K562 (cell line): ENCODE measurements at regions of chr11 and their contacts with region 1.

Region 1: GRCh38 chr11:106619320-106619990 is 398.8 kb downstream of the GUCY1A2 start:
- DNase-seq: no peak
- ATAC-seq: no peak
- H3K4me3 ChIP-seq: no peak overlapping the region
- H3K27ac ChIP-seq: no peak overlapping the region
- H3K4me1 ChIP-seq: no peaks in the 10 kb centered on the region
- H3K27me3 ChIP-seq: no peaks in the 10 kb centered on the region
- CTCF ChIP-seq: no peak
- EP300 ChIP-seq: no peak
- POLR2A ChIP-seq: no peak
- RAD21 ChIP-seq: no peak

Region 2: GRCh38 chr11:106353054-106353453 is 266.4 kb before region 1 on chr11:
- CTCF ChIA-PET with region 1: no interaction called
- POLR2A ChIA-PET with region 1: no interaction called
- in situ Hi-C with region 1: no loop called
- intact Hi-C with region 1: no loop called
- DNase-seq: no peak
- ATAC-seq: no peak
- H3K4me3 ChIP-seq: no peak overlapping the region
- H3K27ac ChIP-seq: no peak overlapping the region
- H3K4me1 ChIP-seq: no peaks in the 10 kb centered on the region
- H3K27me3 ChIP-seq: no peaks in the 10 kb centered on the region
- CTCF ChIP-seq: no peak
- EP300 ChIP-seq: no peak
- POLR2A ChIP-seq: no peak
- RAD21 ChIP-seq: no peak

Region 3: DNA sequence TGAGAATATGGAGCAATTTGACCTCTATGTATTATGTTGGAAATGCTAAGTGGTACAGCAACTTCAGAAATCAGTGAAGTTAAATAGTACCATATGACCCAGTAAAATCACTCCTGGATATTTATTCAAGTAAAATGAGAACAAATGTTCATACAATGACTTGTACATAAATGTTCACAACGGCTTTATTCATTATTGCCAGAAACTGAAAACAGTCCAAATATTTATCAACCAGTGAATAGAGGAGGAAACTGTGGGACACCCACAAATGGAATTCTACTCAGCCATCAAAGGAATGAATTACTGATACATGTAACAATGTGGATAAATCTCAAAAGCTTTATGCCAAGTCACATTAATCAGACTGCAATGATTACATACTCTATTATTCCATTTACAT is 125.7 kb before region 1 on chr11:
- CTCF ChIA-PET with region 1: no interaction called
- POLR2A ChIA-PET with region 1: no interaction called
- in situ Hi-C with region 1: no loop called
- intact Hi-C with region 1: no loop called
- DNase-seq: no peak
- ATAC-seq: no peak
- H3K4me3 ChIP-seq: no peak overlapping the region
- H3K27ac ChIP-seq: no peak overlapping the region
- H3K4me1 ChIP-seq: no peaks in the 10 kb centered on the region
- H3K27me3 ChIP-seq: no peaks in the 10 kb centered on the region
- CTCF ChIP-seq: no peak
- EP300 ChIP-seq: no peak
- POLR2A ChIP-seq: no peak
- RAD21 ChIP-seq: no peak

Region 4: GRCh38 chr11:106552694-106553203 is 66.7 kb before region 1 on chr11:
- CTCF ChIA-PET with region 1: no interaction called
- POLR2A ChIA-PET with region 1: no interaction called
- in situ Hi-C with region 1: no loop called
- intact Hi-C with region 1: loop called (anchors 2 kb)
- DNase-seq: no peak
- ATAC-seq: no peak
- H3K4me3 ChIP-seq: no peak overlapping the region
- H3K27ac ChIP-seq: no peak overlapping the region
- H3K4me1 ChIP-seq: no peaks in the 10 kb centered on the region
- H3K27me3 ChIP-seq: no peaks in the 10 kb centered on the region
- CTCF ChIP-seq: no peak
- EP300 ChIP-seq: no peak
- POLR2A ChIP-seq: no peak
- RAD21 ChIP-seq: no peak

Region 5: DNA sequence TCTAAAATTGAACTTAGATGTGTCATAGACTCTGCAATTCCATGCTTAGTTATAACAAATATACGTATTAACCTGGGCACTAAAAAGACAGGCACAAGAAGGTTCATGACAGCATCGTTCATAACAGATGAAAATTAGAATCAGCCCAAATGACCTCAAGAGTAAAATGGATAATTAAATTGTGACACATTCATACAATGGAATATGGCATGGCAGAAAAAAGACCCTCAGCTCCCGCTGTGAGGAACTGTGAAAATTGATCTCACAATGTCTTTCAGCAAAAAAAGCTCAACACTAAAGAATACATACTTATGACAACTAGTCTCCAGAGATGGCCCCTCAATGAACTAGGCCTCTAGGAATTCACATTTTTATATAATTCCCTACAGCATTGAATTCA is 12.8 kb after region 1 on chr11:
- CTCF ChIA-PET with region 1: no interaction called
- POLR2A ChIA-PET with region 1: no interaction called
- in situ Hi-C with region 1: no loop called
- intact Hi-C with region 1: no loop called
- DNase-seq: no peak
- ATAC-seq: no peak
- H3K4me3 ChIP-seq: no peak overlapping the region
- H3K27ac ChIP-seq: no peak overlapping the region
- H3K4me1 ChIP-seq: no peaks in the 10 kb centered on the region
- H3K27me3 ChIP-seq: no peaks in the 10 kb centered on the region
- CTCF ChIP-seq: no peak
- EP300 ChIP-seq: no peak
- POLR2A ChIP-seq: no peak
- RAD21 ChIP-seq: no peak

Region 6: GRCh38 chr11:106656646-106657045 is 37.2 kb after region 1 on chr11:
- CTCF ChIA-PET with region 1: no interaction called
- POLR2A ChIA-PET with region 1: no interaction called
- in situ Hi-C with region 1: no loop called
- intact Hi-C with region 1: no loop called
- DNase-seq: no peak
- ATAC-seq: no peak
- H3K4me3 ChIP-seq: no peak overlapping the region
- H3K27ac ChIP-seq: no peak overlapping the region
- H3K4me1 ChIP-seq: no peaks in the 10 kb centered on the region
- H3K27me3 ChIP-seq: no peaks in the 10 kb centered on the region
- CTCF ChIP-seq: no peak
- EP300 ChIP-seq: no peak
- POLR2A ChIP-seq: no peak
- RAD21 ChIP-seq: no peak